GM18951 (cell line): ENCODE measurements at regions of chr9 and their contacts with region 1.

Region 1: GRCh38 chr9:1460143-1460769 is 410.1 kb downstream of the DMRT2 start:
- POLR2A ChIP-seq: no peak

Region 2: DNA sequence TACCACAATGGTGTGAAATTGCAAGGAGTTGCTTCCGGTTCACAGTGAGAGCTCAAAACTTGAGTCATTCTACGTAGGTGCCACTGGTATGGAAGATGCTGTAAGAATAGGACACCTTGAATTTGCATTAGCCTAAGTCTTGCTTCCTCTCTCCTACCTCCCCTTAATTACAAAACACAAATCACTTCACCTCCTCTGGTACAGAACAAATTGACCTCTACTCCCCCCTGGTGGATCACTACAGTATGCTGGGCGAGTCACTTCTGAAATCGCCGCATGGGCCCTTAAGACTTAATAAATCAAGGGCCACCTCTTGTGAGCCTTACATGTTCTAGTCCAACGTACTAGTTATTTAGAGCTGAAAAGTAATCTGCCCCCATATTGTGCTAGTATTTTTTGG is 409.6 kb after region 1 on chr9:
- in situ Hi-C with region 1: loop called (anchors 25 kb)
- POLR2A ChIP-seq: no peak

Region 3: DNA sequence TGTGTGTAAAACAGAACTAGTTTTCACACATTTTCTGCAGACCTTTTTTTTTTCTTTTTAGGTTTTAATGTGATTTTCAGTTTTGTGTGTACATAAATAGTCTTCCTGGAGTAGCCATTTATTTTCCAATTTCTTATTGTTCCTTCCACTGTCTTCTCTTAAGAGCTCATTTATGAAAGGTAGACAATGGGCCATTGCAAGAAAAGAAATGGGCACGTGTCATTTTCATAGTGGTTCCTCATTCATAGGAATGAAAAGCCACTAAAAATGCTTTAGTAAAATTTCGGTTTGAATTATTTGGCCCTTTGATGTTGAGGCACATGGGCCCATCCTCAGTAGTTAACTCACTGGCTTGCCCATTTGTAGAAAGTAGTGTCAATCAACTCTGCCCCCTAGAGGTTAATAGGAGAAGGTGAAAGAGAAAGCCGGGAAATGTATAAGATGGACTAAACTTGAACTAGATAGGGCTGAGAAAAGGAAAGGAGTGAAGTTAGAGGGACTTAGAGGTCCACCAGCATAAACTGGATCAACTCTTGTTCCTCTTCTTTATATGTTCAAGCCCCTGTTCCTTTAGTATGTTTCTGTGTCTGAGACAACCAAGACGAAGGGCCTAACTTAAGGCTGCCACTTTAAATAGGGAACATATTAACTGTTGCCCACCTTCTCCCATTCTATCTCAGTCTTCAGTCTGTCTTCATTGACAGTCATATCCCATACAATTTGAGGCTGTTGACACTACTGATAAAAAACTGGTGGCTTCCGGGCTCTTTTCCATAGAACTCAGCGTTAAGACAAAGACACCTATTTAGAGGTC is 627.5 kb after region 1 on chr9:
- in situ Hi-C with region 1: loop called (anchors 25 kb)
- POLR2A ChIP-seq: no peak